ENCODE measurements at regions of chr12 and their contacts with region 1.

Region 1: GRCh38 chr12:123120452-123121166 is 30.3 kb downstream of the PITPNM2 start:
- DNase-seq: peak; percentile 62
- ATAC-seq: peak; percentile 85
- H3K4me3 Mint-ChIP-seq: no peak overlapping the region
- H3K27ac Mint-ChIP-seq: peak overlapping the region; percentile 85
- H3K4me1 Mint-ChIP-seq: peaks cover 63% of the 10 kb centered on the region
- H3K27me3 Mint-ChIP-seq: no peaks in the 10 kb centered on the region

Region 2: GRCh38 chr12:122980183-122981046 is 140.2 kb before region 1 on chr12 and contains the start of gene ARL6IP4:
- CTCF ChIA-PET with region 1: no interaction called
- POLR2A ChIA-PET with region 1: no interaction called
- intact Hi-C with region 1: loop called in 1 of 2 experiments (anchors 1 kb)
- DNase-seq: peak; percentile 82
- ATAC-seq: peak; percentile 77
- H3K4me3 Mint-ChIP-seq: peak within 1 kb of the TSS; percentile 87
- H3K27ac Mint-ChIP-seq: peak within 1 kb of the TSS; percentile 85
- H3K4me1 Mint-ChIP-seq: peaks cover 55% of the 10 kb centered on the region
- H3K27me3 Mint-ChIP-seq: no peaks in the 10 kb centered on the region
- total RNA-seq, gene ARL6IP4: 141 to 163 TPM